ENCODE measurements at regions of chr2 and their contacts with region 1.

Region 1: GRCh38 chr2:18387441-18388206 is 172.8 kb downstream of the RDH14 start:
- DNase-seq: peak; percentile 75
- H3K4me3 Mint-ChIP-seq: no peak overlapping the region
- H3K27ac Mint-ChIP-seq: no peak overlapping the region
- H3K4me1 Mint-ChIP-seq: peaks cover 6% of the 10 kb centered on the region
- H3K27me3 Mint-ChIP-seq: peaks cover 4% of the 10 kb centered on the region
- CTCF ChIP-seq: peak; percentile 95

Region 2: DNA sequence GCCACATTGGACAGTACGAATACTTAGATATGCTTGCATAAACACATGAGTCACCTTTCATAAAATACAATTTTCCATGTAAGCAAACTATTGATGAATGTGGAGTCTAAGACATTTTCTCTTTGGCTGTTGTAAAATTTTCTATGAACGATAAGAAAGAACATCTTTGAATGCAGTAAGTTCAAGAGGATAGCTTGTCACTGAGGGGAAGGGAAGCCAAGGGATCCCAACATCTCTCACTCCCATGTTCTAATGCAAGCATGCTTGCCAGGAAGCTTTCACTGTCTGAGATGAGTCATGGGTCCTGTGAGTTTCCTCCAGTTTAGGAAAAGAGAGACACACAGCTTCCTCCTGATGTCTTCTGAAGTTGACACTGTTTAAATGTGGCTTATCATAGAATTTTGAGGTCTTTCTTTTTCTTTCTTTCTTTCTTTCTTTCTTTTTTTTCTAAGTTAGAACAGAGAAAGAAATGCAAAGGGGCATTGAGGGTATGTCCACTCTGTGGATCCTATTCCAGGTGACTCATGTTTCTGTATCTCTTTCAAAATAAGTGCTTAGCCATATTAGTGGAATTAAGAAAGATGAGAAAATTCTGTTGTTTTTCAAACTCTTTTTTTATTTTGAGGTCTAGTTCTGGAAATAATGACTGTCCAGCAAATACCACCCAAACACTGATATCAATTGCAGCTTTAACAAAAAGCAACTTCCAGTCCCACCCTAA is 26.2 kb after region 1 on chr2:
- CTCF ChIA-PET with region 1: interaction called, 24 read pairs
- POLR2A ChIA-PET with region 1: no interaction called
- intact Hi-C with region 1: no loop called
- DNase-seq: peak; percentile 88
- H3K4me3 Mint-ChIP-seq: no peak overlapping the region
- H3K27ac Mint-ChIP-seq: peak overlapping the region; percentile 13
- H3K4me1 Mint-ChIP-seq: peaks cover 16% of the 10 kb centered on the region
- H3K27me3 Mint-ChIP-seq: no peaks in the 10 kb centered on the region
- CTCF ChIP-seq: no peak

Region 3: DNA sequence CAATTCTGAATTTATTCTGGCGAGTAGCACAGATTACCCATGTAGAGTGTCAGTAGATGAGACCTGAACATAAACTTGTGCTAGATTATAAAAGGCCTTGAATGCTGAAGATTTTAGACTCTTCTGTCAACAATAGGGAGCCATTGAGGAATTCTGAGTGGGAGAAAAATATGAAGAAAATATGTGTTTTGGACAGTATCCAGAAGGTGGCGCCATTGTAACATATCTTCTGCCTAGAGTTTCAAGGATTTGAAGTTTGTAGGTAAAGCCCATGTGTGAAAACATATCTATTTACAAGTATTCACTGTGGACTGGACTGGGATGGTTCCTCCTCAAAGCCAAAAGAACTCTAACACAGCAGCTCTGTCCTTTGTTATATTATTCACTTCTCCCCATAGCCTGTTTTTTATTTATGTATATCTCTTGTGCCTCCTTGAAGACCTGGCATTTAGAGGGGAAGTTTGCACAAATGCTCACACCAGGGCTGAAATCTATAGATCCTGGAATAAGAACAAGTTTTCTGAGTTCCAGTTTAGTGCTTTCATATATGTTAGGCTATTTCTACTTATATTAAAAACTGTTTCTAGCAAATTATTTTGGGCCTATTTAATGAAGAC is 47.9 kb after region 1 on chr2:
- CTCF ChIA-PET with region 1: interaction called, 4 read pairs
- POLR2A ChIA-PET with region 1: no interaction called
- intact Hi-C with region 1: loop called (anchors 1 kb)
- DNase-seq: peak; percentile 69
- H3K4me3 Mint-ChIP-seq: no peak overlapping the region
- H3K27ac Mint-ChIP-seq: no peak overlapping the region
- H3K4me1 Mint-ChIP-seq: no peaks in the 10 kb centered on the region
- H3K27me3 Mint-ChIP-seq: no peaks in the 10 kb centered on the region
- CTCF ChIP-seq: peak; percentile 63

Region 4: DNA sequence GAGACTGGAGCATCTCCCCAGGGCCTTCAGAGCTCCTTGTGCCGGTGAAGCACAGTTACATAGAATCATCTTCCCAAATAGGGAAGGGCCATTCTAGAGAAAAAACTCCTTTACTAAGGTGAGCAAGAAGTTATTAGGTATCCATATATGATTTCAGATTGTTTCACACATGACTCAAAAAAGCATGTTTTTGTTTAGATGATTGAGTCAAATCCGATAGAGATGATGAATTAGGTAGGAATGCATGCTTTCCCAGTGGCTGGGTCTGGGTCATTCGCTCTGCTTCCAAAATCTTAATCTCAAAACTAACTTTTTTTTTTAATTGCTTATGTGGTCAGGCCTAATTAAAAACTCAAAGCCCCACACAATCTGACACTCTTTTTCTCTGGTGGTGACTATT is 197.9 kb after region 1 on chr2:
- CTCF ChIA-PET with region 1: no interaction called
- POLR2A ChIA-PET with region 1: no interaction called
- intact Hi-C with region 1: no loop called
- DNase-seq: peak; percentile 11
- H3K4me3 Mint-ChIP-seq: no peak overlapping the region
- H3K27ac Mint-ChIP-seq: no peak overlapping the region
- H3K4me1 Mint-ChIP-seq: peaks cover 10% of the 10 kb centered on the region
- H3K27me3 Mint-ChIP-seq: no peaks in the 10 kb centered on the region
- CTCF ChIP-seq: no peak

Region 5: DNA sequence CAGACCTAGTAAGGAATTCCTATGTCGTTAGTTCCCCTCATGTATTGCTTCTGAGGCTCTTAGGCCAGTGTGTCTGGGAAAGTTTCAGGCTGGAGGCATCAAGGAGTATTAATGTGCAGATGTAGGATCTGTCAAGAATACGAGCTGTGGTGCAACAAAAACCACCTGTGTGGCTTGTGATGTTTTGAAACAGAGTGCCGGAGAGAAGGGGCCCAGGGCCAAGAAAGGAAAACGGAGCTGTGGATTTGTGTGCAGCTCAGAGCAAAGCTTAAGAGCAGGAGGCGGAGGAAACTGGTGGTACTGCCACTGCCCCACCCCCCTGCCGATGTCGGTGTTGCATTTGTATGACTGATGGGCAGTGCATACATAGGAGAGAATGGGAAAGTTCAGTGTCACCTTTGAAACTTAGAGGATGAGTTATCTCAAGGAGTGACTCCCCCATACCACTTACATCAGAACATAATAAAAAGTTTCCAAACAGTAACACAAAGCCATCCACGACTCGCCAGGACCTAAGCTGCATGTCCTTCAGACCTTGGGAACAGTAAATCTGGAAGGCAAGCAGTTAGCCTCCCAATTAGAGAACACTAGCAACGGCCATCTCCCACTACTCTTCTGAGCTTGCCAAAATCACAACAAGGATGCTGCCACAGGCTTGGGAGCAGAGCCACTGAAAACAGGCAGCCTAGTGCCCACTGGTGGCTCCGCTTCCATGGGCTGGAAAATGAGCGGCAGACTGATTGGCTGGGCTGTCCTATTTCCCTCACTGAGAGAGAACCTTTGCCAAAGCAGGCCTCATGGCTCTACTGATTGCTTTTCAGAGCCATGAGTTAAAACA is 354.5 kb after region 1 on chr2:
- CTCF ChIA-PET with region 1: no interaction called
- POLR2A ChIA-PET with region 1: no interaction called
- intact Hi-C with region 1: loop called (anchors 5 kb)
- DNase-seq: no peak
- H3K4me3 Mint-ChIP-seq: no peak overlapping the region
- H3K27ac Mint-ChIP-seq: no peak overlapping the region
- H3K4me1 Mint-ChIP-seq: no peaks in the 10 kb centered on the region
- H3K27me3 Mint-ChIP-seq: no peaks in the 10 kb centered on the region
- CTCF ChIP-seq: no peak